ENCODE measurements at regions of chr17 and their contacts with region 1.

Region 1: DNA sequence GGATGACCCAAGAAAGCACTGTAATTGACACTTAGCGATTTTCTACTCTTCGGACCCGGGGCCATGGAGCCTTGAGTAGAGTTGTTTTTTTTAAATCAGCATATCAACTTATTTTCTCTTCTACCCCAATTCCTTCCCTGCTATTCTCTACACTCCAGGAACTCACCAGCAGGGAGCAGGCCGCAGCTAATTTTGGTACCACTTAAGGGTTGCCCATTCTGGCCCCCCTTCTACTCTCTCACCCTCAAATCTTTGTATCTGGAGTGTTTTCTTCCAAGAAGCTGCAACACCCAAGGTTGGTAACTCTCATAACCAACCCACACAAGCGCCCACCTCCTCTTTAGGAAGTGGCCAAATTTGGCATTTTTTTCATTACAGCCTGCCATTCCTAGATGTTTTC is 5.5 kb upstream of the ERAL1 start:
- DNase-seq: peak; percentile 36
- H3K4me3 Mint-ChIP-seq: no peak overlapping the region
- H3K27ac Mint-ChIP-seq: no peak overlapping the region
- H3K4me1 Mint-ChIP-seq: peaks cover 10% of the 10 kb centered on the region
- H3K27me3 Mint-ChIP-seq: no peaks in the 10 kb centered on the region

Region 2: DNA sequence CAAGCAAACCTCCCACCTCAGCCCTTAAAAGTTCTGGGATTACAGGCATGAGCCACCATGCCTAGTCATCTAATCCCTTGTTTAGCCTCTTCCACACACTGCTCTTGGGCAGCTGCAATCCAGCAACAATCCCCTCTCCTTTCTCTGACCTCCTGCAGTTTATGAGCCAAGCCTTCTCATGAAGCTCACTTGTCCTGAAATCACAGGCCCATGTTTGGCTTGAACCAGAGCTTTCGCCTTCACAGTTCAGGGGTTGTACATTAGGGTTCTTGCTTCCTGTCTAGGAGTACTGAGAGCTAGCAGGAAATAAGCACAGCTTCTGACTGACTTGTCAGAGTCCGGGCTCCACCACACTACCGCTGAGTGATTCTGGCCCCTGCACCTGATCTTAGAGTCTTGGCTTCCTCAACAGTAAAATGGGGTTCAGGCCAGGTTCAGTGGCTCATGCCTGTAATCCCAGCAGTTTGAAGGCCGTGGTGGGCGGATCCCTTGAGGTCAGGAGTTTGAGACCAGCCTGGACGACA is 21.8 kb after region 1 on chr17:
- CTCF ChIA-PET with region 1: interaction called, 12 read pairs
- DNase-seq: peak; percentile 71
- H3K4me3 Mint-ChIP-seq: peak overlapping the region; percentile 39
- H3K27ac Mint-ChIP-seq: peak overlapping the region; percentile 97
- H3K4me1 Mint-ChIP-seq: peaks cover 19% of the 10 kb centered on the region
- H3K27me3 Mint-ChIP-seq: no peaks in the 10 kb centered on the region

Region 3: GRCh38 chr17:28896884-28897768 is 47.8 kb after region 1 on chr17 and contains the start of gene FLOT2:
- CTCF ChIA-PET with region 1: interaction called, 10 read pairs
- DNase-seq: peak; percentile 78
- H3K4me3 Mint-ChIP-seq: peak within 1 kb of the TSS; percentile 98
- H3K27ac Mint-ChIP-seq: peak within 1 kb of the TSS; percentile 95
- H3K4me1 Mint-ChIP-seq: peaks cover 71% of the 10 kb centered on the region
- H3K27me3 Mint-ChIP-seq: no peaks in the 10 kb centered on the region

Region 4: DNA sequence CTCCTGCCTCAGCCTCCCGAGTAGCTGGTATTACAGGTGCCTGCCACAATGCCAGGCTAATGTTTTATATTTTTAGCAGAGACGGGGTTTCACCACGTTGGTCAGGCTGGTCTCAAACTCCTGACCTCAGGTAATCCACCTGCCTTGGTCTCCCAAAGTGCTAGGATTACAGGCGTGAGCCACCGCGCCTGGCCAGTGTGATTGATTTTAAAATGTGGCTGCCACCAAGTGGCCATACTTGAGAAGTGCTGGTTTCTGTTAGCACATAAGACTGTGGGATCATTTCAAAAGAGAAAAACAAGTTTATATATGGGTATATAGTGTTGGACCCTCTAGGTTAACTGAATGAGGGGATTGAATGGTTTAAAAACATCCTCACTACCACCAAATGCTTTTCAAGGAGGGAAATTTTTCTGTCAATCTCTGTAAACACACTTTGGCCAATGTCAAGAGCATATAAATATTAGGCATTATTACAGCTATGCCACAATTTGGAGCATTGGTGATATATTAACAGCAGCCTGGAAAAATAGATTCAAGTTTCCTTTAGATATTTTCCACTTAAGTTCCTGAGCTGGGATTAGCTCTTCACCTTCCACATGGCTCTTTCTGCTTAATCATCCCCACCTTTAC is 67.1 kb after region 1 on chr17:
- CTCF ChIA-PET with region 1: interaction called, 12 read pairs
- DNase-seq: peak; percentile 67
- H3K4me3 Mint-ChIP-seq: no peak overlapping the region
- H3K27ac Mint-ChIP-seq: peak overlapping the region; percentile 13
- H3K4me1 Mint-ChIP-seq: no peaks in the 10 kb centered on the region
- H3K27me3 Mint-ChIP-seq: no peaks in the 10 kb centered on the region

Region 5: DNA sequence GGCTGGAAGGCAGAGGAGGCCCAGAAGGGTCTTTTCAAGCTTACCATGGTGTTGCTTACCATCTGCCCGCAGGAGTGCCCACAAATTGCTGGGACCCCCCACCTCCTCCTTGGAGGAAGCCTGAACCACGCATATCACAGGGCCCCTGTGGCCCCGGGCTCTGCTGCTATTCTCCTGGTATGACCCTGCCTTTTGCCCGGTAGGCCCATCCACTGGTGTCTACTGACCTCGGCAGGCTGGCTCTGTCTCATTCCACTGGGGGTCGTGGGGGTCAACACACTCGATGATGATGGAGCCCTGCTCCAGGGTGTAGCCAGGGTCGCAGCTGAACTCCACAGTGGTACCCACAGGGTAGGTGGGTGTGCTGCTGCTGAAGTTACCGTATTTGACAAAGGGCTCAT is 110.2 kb after region 1 on chr17:
- CTCF ChIA-PET with region 1: no interaction called
- DNase-seq: no peak
- H3K4me3 Mint-ChIP-seq: no peak overlapping the region
- H3K27ac Mint-ChIP-seq: no peak overlapping the region
- H3K4me1 Mint-ChIP-seq: no peaks in the 10 kb centered on the region
- H3K27me3 Mint-ChIP-seq: peaks cover 20% of the 10 kb centered on the region

Measured in activated naive CD4-positive, alpha-beta T cell treated with anti-CD3 and anti-CD28 coated beads, Interleukin-2, amount 10 ng/mL, durations not matched to agents 7 days and 5 days (primary cell).